T-cell (primary cell): ENCODE measurements at regions of chr11 and their contacts with region 1.

Region 1: DNA sequence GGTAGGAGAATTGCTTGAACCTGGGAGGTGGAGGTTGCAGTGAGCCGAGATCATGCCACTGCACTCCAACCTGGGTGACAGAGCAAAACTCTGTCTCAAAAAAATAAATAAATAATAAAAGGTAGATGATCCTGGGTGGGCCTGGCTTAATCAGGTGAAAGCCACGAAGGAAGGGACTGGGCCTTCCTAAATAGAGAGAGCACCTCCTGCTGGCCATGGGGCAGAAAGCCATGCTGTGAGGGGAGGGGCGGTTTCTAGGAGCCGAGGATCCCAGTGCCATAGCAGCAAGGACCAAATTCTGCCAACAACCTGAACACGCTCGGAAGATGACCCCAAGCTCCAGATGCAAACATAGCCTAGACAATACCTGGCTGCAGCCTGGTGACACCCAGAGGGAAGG is 24.5 kb upstream of the DGKZ start:
- DNase-seq: no peak
- ATAC-seq: no peak
- H3K4me3 ChIP-seq: no peak overlapping the region
- H3K4me3 Mint-ChIP-seq: no peak overlapping the region
- H3K27ac ChIP-seq: no peak overlapping the region
- H3K27ac Mint-ChIP-seq: no peak overlapping the region
- H3K4me1 ChIP-seq: peaks cover 18 to 22% of the 10 kb centered on the region in 2 experiments
- H3K4me1 Mint-ChIP-seq: peaks cover 26 to 43% (median 28%) of the 10 kb centered on the region in 3 donors
- H3K27me3 ChIP-seq: peaks cover 0 to 7% of the 10 kb centered on the region in 2 experiments
- H3K27me3 Mint-ChIP-seq: peaks cover 0 to 4% of the 10 kb centered on the region in 2 donors

Region 2: DNA sequence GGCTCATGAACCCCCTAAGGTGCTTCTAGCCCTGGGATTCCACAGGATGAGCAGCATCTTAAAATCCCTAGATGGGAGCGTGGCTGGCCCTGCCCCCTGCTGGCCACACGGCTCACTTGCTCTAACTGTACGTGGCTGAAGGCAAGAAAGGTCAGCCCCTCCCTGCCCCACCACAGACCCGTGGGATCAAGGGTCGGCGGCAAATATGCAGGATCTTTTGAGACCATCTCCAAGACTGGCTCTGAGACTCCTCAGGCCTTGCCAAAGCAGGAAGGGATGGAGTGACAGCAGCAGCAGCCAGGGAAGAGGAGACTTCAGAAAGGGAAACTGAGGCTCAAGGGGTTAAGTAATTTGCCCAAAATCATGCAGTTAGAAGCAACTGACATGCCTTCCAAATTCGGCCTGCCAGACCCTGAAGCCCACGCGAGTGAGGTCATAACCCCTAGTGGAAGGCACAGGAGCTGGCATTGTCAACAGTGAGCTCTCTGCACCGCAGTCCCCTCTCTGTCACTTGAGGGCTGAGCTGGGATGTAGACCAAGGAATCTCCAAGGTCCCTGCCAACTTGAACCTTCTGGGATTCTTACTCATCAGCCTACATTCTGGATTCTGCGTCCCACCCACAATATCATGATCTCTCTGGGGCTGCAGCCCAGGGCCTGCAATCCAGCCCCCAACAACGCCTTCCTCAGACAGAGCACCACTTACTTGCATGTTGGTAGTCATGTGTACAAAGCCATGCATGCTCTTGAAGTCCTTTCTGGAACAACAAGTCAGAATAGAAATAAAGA is 13.9 kb before region 1 on chr11:
- CTCF ChIA-PET with region 1: interaction called, 3 to 10 read pairs
- POLR2A ChIA-PET with region 1: no interaction called
- DNase-seq: peak in 33 of 35 experiments; percentile 15 to 75 (median 53)
- ATAC-seq: peak; percentile 69 to 82 (median 76)
- H3K4me3 ChIP-seq: no peak overlapping the region
- H3K4me3 Mint-ChIP-seq: peak overlapping the region in 1 of 3 donors; percentile 11
- H3K27ac ChIP-seq: no peak overlapping the region
- H3K27ac Mint-ChIP-seq: no peak overlapping the region
- H3K4me1 ChIP-seq: peaks cover 6 to 21% of the 10 kb centered on the region in 2 experiments
- H3K4me1 Mint-ChIP-seq: peaks cover 6 to 18% (median 13%) of the 10 kb centered on the region in 3 donors
- H3K27me3 ChIP-seq: peaks cover 0 to 16% of the 10 kb centered on the region in 2 experiments
- H3K27me3 Mint-ChIP-seq: peaks cover 0 to 3% of the 10 kb centered on the region in 2 donors

Region 3: GRCh38 chr11:46570790-46571398 is 248.1 kb after region 1 on chr11:
- CTCF ChIA-PET with region 1: no interaction called
- POLR2A ChIA-PET with region 1: interaction called in 1 of 2 experiments, 10 read pairs
- DNase-seq: no peak
- ATAC-seq: no peak
- H3K4me3 ChIP-seq: no peak overlapping the region
- H3K4me3 Mint-ChIP-seq: no peak overlapping the region
- H3K27ac ChIP-seq: no peak overlapping the region
- H3K27ac Mint-ChIP-seq: no peak overlapping the region
- H3K4me1 ChIP-seq: peaks cover 3 to 4% of the 10 kb centered on the region in 2 experiments
- H3K4me1 Mint-ChIP-seq: peaks cover 15 to 37% (median 31%) of the 10 kb centered on the region in 3 donors
- H3K27me3 ChIP-seq: no peaks in the 10 kb centered on the region
- H3K27me3 Mint-ChIP-seq: no peaks in the 10 kb centered on the region